Dorsolateral prefrontal cortex (tissue), 120 donors: ENCODE measurements at regions of chr2 and their contacts with region 1.

Region 1: GRCh38 chr2:15939854-15940660 is at the start of gene MYCN:
- DNase-seq: peak; percentile 14 to 85 (median 75)
- H3K4me3 ChIP-seq: peak within 1 kb of the TSS; percentile 50 to 90 (median 71)
- H3K27ac ChIP-seq: peak within 1 kb of the TSS; percentile 7 to 92 (median 84)
- H3K27me3 ChIP-seq: peaks cover 0 to 11% (median 0%) of the 10 kb centered on the region in 45 donors
- CTCF ChIP-seq: peak in 53 of 56 donors; percentile 25 to 96 (median 88)
- total RNA-seq, gene MYCN: 1.4 to 20.5 (median 5.9) TPM

Region 2: GRCh38 chr2:15719566-15720313 is 220.3 kb before region 1 on chr2:
- intact Hi-C with region 1: loop called in 1 of 2 experiments (anchors 5 kb)
- DNase-seq: no peak
- H3K4me3 ChIP-seq: no peak overlapping the region
- H3K27ac ChIP-seq: no peak overlapping the region
- H3K27me3 ChIP-seq: peaks cover 0 to 2% (median 0%) of the 10 kb centered on the region in 45 donors
- CTCF ChIP-seq: no peak

Region 3: GRCh38 chr2:15782009-15782751 is 157.9 kb before region 1 on chr2:
- intact Hi-C with region 1: no loop called
- DNase-seq: no peak
- H3K4me3 ChIP-seq: no peak overlapping the region
- H3K27ac ChIP-seq: no peak overlapping the region
- H3K27me3 ChIP-seq: peaks cover 0 to 11% (median 0%) of the 10 kb centered on the region in 45 donors
- CTCF ChIP-seq: no peak

Region 4: GRCh38 chr2:15846626-15847025 is 93.4 kb before region 1 on chr2:
- intact Hi-C with region 1: no loop called
- DNase-seq: peak in 6 of 10 donors; percentile 32 to 83 (median 45)
- H3K4me3 ChIP-seq: no peak overlapping the region
- H3K27ac ChIP-seq: peak overlapping the region in 2 of 59 donors; percentile 27 to 46
- H3K27me3 ChIP-seq: no peaks in the 10 kb centered on the region
- CTCF ChIP-seq: no peak

Region 5: GRCh38 chr2:15965564-15966019 is 25.5 kb after region 1 on chr2:
- intact Hi-C with region 1: no loop called
- DNase-seq: no peak
- H3K4me3 ChIP-seq: no peak overlapping the region
- H3K27ac ChIP-seq: no peak overlapping the region
- H3K27me3 ChIP-seq: no peaks in the 10 kb centered on the region
- CTCF ChIP-seq: no peak

Region 6: DNA sequence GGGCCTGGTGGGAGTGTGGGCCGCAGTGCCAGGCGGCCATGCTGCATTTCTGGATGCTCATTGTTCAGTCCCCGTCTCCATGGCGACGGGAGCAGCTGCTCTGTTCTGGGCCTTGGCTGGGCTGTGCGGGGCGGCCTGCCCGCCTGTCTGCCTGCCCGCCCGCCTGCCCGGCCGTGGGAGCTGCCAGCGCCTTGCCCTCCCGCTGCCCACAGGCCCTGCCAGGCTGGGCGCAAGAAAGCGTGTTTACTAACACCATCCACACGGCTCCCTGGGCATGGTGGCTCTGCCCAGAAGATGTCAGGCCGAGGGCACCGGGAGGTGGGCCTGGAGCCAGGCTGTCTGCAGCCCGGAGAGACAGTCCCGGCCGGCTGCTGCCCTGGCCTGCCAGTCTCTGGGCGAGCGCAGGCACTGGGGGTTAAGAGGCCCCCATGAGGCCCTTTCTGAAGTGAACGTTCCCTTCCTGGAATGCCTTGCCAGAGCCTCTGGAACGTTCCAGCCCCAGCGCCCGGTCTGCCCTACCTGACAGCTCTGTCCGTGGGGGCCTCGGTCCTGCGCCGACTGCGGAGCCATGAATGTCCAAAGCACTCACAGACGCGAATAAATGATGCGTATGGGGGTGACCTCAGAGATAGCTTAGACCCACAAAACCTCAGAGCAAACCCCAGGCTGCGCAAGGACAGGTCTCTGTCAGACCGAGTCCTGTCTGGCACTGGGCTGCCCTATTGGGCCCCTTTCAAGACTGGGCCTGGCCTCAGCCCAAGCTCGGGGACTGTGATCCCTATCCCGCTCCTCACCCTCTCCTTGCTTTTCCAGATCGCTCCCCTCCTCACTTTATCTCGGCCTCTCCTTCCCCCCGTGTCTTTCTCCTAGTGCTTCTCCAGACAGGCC is 44.6 kb after region 1 on chr2:
- intact Hi-C with region 1: loop called (anchors 2 kb)
- DNase-seq: peak; percentile 87 to 95 (median 92)
- H3K4me3 ChIP-seq: peak overlapping the region in 22 of 59 donors; percentile 0 to 37 (median 19)
- H3K27ac ChIP-seq: peak overlapping the region; percentile 64 to 96 (median 91)
- H3K27me3 ChIP-seq: no peaks in the 10 kb centered on the region
- CTCF ChIP-seq: peak in 20 of 56 donors; percentile 6 to 42 (median 21)

Region 7: GRCh38 chr2:16069933-16070647 is 130.0 kb after region 1 on chr2:
- intact Hi-C with region 1: loop called (anchors 1 to 2 kb)
- DNase-seq: peak; percentile 23 to 96 (median 89)
- H3K4me3 ChIP-seq: peak overlapping the region in 32 of 59 donors; percentile 0 to 55 (median 30)
- H3K27ac ChIP-seq: peak overlapping the region; percentile 83 to 100 (median 96)
- H3K27me3 ChIP-seq: no peaks in the 10 kb centered on the region
- CTCF ChIP-seq: peak in 9 of 56 donors; percentile 2 to 30 (median 18)

Region 8: GRCh38 chr2:16321872-16322271 is 381.8 kb after region 1 on chr2:
- intact Hi-C with region 1: loop called (anchors 1 to 2 kb)
- DNase-seq: peak in 3 of 10 donors; percentile 14 to 51 (median 47)
- H3K4me3 ChIP-seq: no peak overlapping the region
- H3K27ac ChIP-seq: peak overlapping the region in 4 of 59 donors; percentile 45 to 79 (median 74)
- H3K27me3 ChIP-seq: no peaks in the 10 kb centered on the region
- CTCF ChIP-seq: peak in 47 of 56 donors; percentile 12 to 69 (median 45)

Region 9: DNA sequence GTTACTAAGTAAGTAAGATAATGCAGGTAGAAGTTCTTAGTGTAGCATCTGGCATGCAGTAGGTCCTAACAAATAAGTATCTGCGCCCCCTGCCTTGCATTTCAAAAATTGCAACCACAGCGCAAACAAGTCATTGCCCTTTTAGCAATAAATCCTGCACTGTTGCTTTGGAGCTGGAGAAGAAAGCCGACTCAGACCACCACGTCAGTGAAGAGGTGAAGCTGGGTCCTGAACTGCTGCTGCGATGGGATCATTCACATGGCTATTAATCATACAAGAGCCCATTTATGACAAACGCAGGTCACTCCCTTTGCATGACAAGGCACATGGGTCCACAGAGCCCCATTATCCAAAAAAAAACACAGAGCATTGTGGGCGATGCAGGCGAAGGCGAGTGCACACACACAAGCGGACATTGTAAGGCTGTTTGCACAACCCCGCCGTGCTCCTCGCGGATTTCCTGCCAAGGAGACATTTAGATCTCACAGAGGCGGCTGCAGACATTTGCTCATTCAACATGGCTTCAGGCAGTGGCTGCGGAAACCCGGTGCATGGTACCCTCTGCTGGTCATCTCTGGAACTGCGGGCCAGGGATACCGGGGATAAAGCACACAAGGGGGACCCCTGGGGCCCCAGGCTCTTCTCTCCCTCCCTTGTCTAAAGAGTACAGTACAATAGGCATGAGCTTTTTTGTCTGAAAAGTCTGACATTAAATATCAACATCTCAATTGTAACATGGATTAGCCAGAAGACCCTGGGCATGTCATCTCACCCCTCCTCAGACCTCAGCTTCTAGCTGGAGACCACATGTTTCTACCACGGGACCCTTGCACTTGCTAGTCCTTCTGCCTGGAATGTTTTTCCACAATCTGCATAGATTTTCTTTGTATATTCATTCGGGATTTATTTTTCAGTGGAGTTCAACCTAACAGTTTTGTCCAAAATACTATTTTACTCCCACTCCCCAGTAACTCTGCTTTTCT is 668.9 kb after region 1 on chr2:
- intact Hi-C with region 1: loop called (anchors 5 kb)
- DNase-seq: peak; percentile 81 to 93 (median 90)
- H3K4me3 ChIP-seq: peak overlapping the region; percentile 32 to 74 (median 54)
- H3K27ac ChIP-seq: peak overlapping the region; percentile 18 to 91 (median 83)
- H3K27me3 ChIP-seq: no peaks in the 10 kb centered on the region
- CTCF ChIP-seq: peak; percentile 81 to 99 (median 93)